ENCODE measurements at regions of chr1 and their contacts with region 1.

Region 1: GRCh38 chr1:13908128-13908527 is 208.1 kb downstream of the PRDM2 start:
- DNase-seq: no peak
- H3K4me3 ChIP-seq: no peak overlapping the region
- H3K27ac ChIP-seq: no peak overlapping the region
- H3K4me1 ChIP-seq: no peaks in the 10 kb centered on the region
- H3K27me3 ChIP-seq: peaks cover 42% of the 10 kb centered on the region
- CTCF ChIP-seq: no peak

Region 2: DNA sequence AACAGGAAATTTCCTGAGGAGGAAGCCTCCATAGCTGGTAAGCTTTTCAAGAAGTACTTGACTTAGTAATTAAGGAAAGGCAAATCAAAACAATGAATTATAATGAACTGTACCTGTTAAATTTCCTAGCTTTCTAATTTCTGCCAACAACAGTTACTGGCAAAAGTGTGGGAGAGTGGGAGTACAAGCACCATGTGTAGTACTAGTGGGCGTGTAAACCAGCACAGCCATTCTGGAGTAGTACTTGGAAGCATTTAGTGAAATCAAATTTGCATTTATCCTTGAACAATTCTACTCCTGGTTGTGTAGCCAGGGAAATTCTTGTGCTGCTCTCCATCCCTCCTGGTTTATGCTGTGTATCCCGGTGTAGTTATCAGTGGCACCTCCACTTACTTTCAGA is 17.4 kb before region 1 on chr1:
- CTCF ChIA-PET with region 1: no interaction called
- POLR2A ChIA-PET with region 1: interaction called, 10 read pairs
- intact Hi-C with region 1: no loop called
- DNase-seq: no peak
- H3K4me3 ChIP-seq: no peak overlapping the region
- H3K27ac ChIP-seq: no peak overlapping the region
- H3K4me1 ChIP-seq: no peaks in the 10 kb centered on the region
- H3K27me3 ChIP-seq: peaks cover 40% of the 10 kb centered on the region
- CTCF ChIP-seq: no peak